T-cell (primary cell): ENCODE measurements at regions of chr16 and their contacts with region 1.

Region 1: DNA sequence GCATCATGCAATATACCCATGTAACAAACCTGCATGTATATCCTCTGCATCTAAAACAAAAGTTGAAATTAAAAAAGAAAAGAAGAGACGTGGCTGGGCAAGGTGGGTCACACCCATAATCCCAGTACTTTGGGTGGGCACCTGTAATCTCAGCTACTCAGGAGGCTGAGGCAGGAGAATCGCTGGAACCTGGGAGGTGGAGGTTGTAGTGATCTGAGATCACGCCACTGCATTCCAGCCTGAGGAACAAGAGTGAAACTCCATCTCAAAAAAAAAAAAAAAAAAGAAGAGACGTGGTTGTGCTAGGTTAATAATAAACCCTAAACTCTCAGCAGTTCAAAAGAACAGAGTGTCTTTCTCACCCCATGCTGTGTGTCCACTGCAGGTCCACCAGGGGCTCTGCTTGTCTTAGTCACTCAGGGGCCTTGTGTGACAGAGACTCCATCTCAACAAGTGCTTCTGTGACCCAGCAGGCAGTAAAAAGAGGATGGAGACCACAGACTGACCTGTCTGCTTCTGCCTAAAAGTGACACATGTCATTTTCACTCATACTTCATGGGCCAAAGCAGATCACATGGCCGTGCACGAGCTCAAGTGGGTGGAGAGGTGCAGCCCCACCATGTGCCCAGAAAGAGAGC is 22.3 kb upstream of the N4BP1 start:
- DNase-seq: no peak
- ATAC-seq: no peak
- H3K4me3 ChIP-seq: no peak overlapping the region
- H3K4me3 Mint-ChIP-seq: no peak overlapping the region
- H3K27ac ChIP-seq: no peak overlapping the region
- H3K27ac Mint-ChIP-seq: no peak overlapping the region
- H3K4me1 ChIP-seq: peaks cover 0 to 8% of the 10 kb centered on the region in 2 experiments
- H3K4me1 Mint-ChIP-seq: peaks cover 7 to 8% (median 7%) of the 10 kb centered on the region in 3 donors
- H3K27me3 ChIP-seq: peaks cover 0 to 11% of the 10 kb centered on the region in 2 experiments
- H3K27me3 Mint-ChIP-seq: no peaks in the 10 kb centered on the region

Region 2: GRCh38 chr16:47162670-47163420 is 1469.4 kb before region 1 on chr16:
- CTCF ChIA-PET with region 1: interaction called in 1 of 2 experiments, 10 read pairs
- POLR2A ChIA-PET with region 1: no interaction called
- DNase-seq: no peak
- ATAC-seq: no peak
- H3K4me3 ChIP-seq: no peak overlapping the region
- H3K4me3 Mint-ChIP-seq: no peak overlapping the region
- H3K27ac ChIP-seq: no peak overlapping the region
- H3K27ac Mint-ChIP-seq: no peak overlapping the region
- H3K4me1 ChIP-seq: no peaks in the 10 kb centered on the region
- H3K4me1 Mint-ChIP-seq: no peaks in the 10 kb centered on the region
- H3K27me3 ChIP-seq: no peaks in the 10 kb centered on the region
- H3K27me3 Mint-ChIP-seq: no peaks in the 10 kb centered on the region

Region 3: DNA sequence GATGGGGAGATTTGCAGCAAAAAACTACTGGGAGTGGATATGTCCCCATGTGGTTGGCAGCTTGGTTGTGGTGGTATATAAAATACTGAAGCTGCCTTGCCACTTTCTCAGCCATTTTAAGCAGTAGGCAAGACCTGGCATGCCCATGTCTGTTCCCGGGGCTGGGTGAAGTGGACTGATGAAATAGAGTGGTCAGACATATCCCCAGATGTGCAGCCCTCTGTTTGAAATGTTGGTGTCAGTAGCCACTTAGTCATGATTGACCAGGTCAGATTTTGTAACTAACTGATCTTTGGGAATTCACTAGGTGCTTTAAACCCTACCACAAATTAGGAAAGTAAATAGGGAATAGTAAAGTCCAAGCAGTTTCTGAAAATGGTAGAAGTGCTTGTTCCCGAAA is 1019.5 kb before region 1 on chr16:
- CTCF ChIA-PET with region 1: no interaction called
- POLR2A ChIA-PET with region 1: no interaction called
- DNase-seq: no peak
- ATAC-seq: no peak
- H3K4me3 ChIP-seq: no peak overlapping the region
- H3K4me3 Mint-ChIP-seq: no peak overlapping the region
- H3K27ac ChIP-seq: no peak overlapping the region
- H3K27ac Mint-ChIP-seq: no peak overlapping the region
- H3K4me1 ChIP-seq: no peaks in the 10 kb centered on the region
- H3K4me1 Mint-ChIP-seq: peaks cover 0 to 15% (median 4%) of the 10 kb centered on the region in 3 donors
- H3K27me3 ChIP-seq: no peaks in the 10 kb centered on the region
- H3K27me3 Mint-ChIP-seq: no peaks in the 10 kb centered on the region

Region 4: DNA sequence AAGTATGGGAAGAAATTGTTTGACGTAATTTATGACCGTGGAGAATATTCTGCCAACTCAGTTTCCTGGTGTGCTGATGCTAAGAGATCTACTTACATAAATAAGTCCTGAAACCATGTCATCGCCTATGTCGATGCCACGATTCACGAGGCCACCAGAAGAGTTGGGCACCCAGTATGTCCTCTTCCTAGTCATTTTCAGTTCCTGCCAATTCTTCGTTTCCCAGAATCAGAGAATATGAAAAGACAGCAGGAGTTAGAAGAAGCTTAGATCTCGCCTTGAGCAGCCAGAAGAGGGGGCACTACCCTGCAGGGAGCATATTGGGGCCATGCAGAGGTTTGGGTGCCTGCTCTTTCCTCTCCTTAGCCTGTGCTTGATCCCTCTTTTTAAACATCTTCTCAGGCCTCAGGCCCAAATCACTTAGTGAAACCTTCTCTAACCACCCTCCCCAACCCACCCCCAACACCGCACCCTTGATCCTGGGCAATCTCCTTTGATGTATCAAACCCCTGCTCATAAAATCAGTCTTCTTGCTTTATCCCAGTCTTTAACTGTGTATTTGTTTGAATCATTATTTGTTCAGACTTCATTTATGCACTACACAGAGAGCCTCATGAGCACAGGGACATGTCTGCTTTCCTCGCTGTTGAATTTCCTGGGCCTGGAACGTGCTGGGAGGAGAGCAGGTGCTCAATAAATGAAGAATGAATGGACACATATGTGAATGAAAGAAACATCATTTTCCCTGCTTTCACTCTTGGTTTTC is 400.3 kb before region 1 on chr16:
- CTCF ChIA-PET with region 1: interaction called, 10 to 12 read pairs
- POLR2A ChIA-PET with region 1: no interaction called
- DNase-seq: peak in 17 of 35 experiments; percentile 3 to 39 (median 14)
- ATAC-seq: peak in 1 of 4 experiments; percentile 57
- H3K4me3 ChIP-seq: no peak overlapping the region
- H3K4me3 Mint-ChIP-seq: no peak overlapping the region
- H3K27ac ChIP-seq: no peak overlapping the region
- H3K27ac Mint-ChIP-seq: no peak overlapping the region
- H3K4me1 ChIP-seq: no peaks in the 10 kb centered on the region
- H3K4me1 Mint-ChIP-seq: no peaks in the 10 kb centered on the region
- H3K27me3 ChIP-seq: peaks cover 0 to 5% of the 10 kb centered on the region in 2 experiments
- H3K27me3 Mint-ChIP-seq: peaks cover 7 to 8% of the 10 kb centered on the region in 2 donors

Region 5: DNA sequence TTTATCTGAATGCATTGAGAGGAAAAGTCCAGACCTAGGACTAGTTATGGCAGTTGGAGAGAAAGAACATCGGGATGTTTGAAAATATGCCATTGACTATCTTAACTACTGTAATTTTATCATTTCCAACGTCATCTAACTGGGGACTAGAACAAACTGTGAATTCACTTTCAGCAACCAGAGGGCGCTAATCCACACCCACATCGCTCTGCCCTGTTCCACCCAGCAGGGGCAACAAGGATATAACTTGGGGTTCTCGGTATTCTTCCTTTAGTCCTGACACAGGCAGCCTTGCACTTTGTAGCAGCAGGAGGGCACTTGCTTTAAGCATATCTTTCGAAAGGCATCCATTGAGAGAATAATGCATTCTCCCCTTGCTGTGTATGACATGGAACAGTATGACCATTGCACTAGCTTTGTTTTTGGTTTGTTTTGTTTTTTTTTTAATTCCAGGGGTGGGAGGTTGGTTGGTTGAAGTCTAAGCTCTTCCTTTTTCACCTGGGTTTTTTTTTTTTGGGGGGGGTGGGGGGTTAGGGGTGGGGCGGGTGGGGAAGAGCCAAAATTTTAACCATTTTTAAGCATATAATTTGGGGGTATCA is 278.6 kb before region 1 on chr16:
- CTCF ChIA-PET with region 1: interaction called, 27 to 46 read pairs
- POLR2A ChIA-PET with region 1: no interaction called
- DNase-seq: peak; percentile 30 to 87 (median 67)
- ATAC-seq: peak; percentile 88 to 94 (median 92)
- H3K4me3 ChIP-seq: no peak overlapping the region
- H3K4me3 Mint-ChIP-seq: no peak overlapping the region
- H3K27ac ChIP-seq: no peak overlapping the region
- H3K27ac Mint-ChIP-seq: peak overlapping the region; percentile 56 to 73
- H3K4me1 ChIP-seq: peaks cover 2 to 3% of the 10 kb centered on the region in 2 experiments
- H3K4me1 Mint-ChIP-seq: peaks cover 7 to 10% (median 10%) of the 10 kb centered on the region in 3 donors
- H3K27me3 ChIP-seq: no peaks in the 10 kb centered on the region
- H3K27me3 Mint-ChIP-seq: no peaks in the 10 kb centered on the region

Region 6: DNA sequence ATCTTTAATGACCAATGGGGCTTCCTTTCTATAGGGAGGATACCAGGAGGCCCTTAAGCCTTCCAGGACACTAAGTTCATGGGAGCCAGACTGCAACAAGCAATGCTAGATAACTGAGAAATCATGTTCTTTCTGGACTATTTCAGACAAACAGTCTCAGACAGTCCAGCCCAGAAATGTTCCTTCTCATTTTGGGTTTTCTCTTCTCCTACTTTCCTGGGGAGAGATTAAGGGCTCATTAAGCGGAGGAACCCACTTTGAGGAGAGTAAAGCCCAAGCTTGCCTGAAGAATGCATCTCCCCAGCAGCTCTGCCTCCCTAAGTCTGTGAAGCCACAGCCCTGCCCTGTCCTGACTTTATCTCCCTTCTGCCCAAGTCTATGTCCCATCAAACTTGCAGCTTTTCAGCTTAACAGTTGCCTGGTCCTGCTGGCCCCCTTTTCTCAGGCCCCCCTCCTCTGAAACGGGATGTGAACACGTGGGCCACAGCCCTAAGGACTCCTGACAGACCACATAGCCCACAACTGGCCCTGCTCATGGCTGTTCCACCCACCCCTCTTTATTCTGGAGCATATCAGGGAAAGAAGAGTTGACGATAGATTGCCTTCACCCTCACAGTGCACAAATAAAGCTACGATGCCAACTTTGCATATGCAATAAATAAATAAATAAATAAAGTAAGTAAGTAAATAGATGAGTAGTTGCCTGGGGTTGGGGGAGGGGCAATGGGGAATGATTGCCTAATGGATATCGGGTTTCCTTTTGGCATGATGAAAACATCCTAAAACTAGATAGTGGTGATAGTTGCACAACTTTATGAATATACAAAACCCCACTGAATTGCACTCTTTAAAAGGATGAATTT is 133.3 kb before region 1 on chr16:
- CTCF ChIA-PET with region 1: no interaction called
- POLR2A ChIA-PET with region 1: no interaction called
- DNase-seq: no peak
- ATAC-seq: no peak
- H3K4me3 ChIP-seq: no peak overlapping the region
- H3K4me3 Mint-ChIP-seq: no peak overlapping the region
- H3K27ac ChIP-seq: no peak overlapping the region
- H3K27ac Mint-ChIP-seq: no peak overlapping the region
- H3K4me1 ChIP-seq: no peaks in the 10 kb centered on the region
- H3K4me1 Mint-ChIP-seq: peaks cover 0 to 1% (median 0%) of the 10 kb centered on the region in 3 donors
- H3K27me3 ChIP-seq: peaks cover 0 to 4% of the 10 kb centered on the region in 2 experiments
- H3K27me3 Mint-ChIP-seq: no peaks in the 10 kb centered on the region

Region 7: GRCh38 chr16:48583075-48584065 is 48.9 kb before region 1 on chr16:
- CTCF ChIA-PET with region 1: no interaction called
- POLR2A ChIA-PET with region 1: no interaction called
- DNase-seq: no peak
- ATAC-seq: no peak
- H3K4me3 ChIP-seq: no peak overlapping the region
- H3K4me3 Mint-ChIP-seq: no peak overlapping the region
- H3K27ac ChIP-seq: no peak overlapping the region
- H3K27ac Mint-ChIP-seq: no peak overlapping the region
- H3K4me1 ChIP-seq: no peaks in the 10 kb centered on the region
- H3K4me1 Mint-ChIP-seq: peaks cover 31 to 54% (median 49%) of the 10 kb centered on the region in 3 donors
- H3K27me3 ChIP-seq: no peaks in the 10 kb centered on the region
- H3K27me3 Mint-ChIP-seq: no peaks in the 10 kb centered on the region

Region 8: GRCh38 chr16:48608871-48609651 is 23.2 kb before region 1 on chr16:
- CTCF ChIA-PET with region 1: interaction called, 3 to 15 read pairs
- POLR2A ChIA-PET with region 1: no interaction called
- DNase-seq: peak in 27 of 35 experiments; percentile 22 to 60 (median 45)
- ATAC-seq: no peak
- H3K4me3 ChIP-seq: peak overlapping the region; percentile 79 to 85
- H3K4me3 Mint-ChIP-seq: no peak overlapping the region
- H3K27ac ChIP-seq: peak overlapping the region; percentile 82
- H3K27ac Mint-ChIP-seq: peak overlapping the region; percentile 84 to 91
- H3K4me1 ChIP-seq: peaks cover 41 to 88% of the 10 kb centered on the region in 2 experiments
- H3K4me1 Mint-ChIP-seq: peaks cover 37 to 45% (median 40%) of the 10 kb centered on the region in 3 donors
- H3K27me3 ChIP-seq: no peaks in the 10 kb centered on the region
- H3K27me3 Mint-ChIP-seq: peaks cover 0 to 1% of the 10 kb centered on the region in 2 donors